PC-9 (cell line): ENCODE measurements at regions of chr7 and their contacts with region 1.

Region 1: GRCh38 chr7:100221231-100221718 is 1.5 kb downstream of the PVRIG start:
- DNase-seq: no peak
- H3K4me3 ChIP-seq: no peak overlapping the region
- H3K27ac ChIP-seq: no peak overlapping the region
- H3K4me1 ChIP-seq: no peaks in the 10 kb centered on the region
- H3K27me3 ChIP-seq: no peaks in the 10 kb centered on the region
- CTCF ChIP-seq: no peak

Region 2: DNA sequence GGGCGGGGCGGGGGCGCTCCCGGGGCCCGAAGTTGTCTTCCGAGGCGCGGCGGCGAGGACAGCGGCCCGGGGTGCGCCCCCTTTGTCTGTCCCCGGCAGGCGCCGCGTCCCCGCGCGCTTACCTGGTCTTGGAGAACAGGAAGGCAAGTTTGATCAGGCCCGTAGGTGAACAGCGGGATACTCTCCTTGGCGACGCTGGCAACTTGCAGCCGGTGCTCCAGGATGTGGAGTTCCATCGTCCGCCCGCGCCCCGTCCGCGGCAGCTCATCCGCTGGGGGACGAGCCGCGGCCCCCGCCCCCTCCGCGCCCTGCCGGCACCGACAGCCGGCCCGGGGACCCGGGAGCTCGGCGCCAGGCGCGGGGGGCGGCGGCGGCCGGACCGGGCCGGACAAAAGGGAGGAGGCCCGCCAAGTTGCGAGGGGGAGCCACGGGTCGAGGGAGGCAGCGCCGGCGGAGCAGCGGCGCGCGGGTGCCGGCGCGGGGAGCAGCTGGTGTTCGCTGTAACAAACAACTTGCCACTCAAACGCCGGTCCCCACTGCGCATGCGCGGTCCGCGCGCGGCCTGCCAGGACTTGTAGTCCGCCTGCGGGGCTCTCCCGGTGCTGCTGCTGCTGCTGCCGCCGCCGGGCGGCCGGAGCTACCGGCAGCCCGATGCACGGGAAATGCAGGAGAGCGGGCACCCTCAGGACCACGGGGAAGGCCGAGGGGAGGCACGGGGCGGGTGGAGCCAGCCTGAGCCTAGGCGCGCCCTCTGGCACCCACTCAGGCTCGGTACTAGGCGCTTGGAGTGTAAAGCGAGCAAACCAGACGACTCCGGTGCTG is 50.7 kb after region 1 on chr7:
- CTCF ChIA-PET with region 1: no interaction called
- POLR2A ChIA-PET with region 1: interaction called, 20 read pairs
- intact Hi-C with region 1: no loop called
- DNase-seq: peak; percentile 78 to 98
- H3K4me3 ChIP-seq: peak overlapping the region; percentile 60
- H3K27ac ChIP-seq: no peak overlapping the region
- H3K4me1 ChIP-seq: peaks cover 28% of the 10 kb centered on the region
- H3K27me3 ChIP-seq: no peaks in the 10 kb centered on the region
- CTCF ChIP-seq: no peak